Ovary (tissue), 10 donors: ENCODE measurements at regions of chr16 and their contacts with region 1.

Region 1: DNA sequence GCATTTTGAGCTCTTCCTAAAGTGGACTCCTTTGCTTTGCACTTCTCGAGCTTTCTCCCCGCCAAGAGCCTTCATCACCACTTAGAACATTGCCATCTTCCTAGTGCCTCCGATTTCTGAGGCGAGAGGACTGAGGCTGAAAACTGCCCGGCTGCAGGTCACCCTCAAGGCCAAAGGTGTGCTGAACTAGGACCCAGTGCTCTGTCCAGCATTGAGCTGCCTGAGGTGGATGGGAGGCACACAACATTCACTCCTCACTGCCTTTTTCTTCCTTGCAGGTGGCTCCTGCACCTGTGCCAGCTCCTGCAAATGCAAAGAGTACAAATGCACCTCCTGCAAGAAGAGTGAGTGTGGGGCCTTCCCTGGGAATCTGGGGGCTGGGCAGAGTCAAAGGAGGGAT is 5.4 kb downstream of the MT1A start:
- DNase-seq: no peak
- H3K4me3 ChIP-seq: no peak overlapping the region
- H3K27ac ChIP-seq: no peak overlapping the region
- H3K4me1 ChIP-seq: peaks cover 3% of the 10 kb centered on the region
- H3K27me3 ChIP-seq: no peaks in the 10 kb centered on the region
- CTCF ChIP-seq: no peak
- EP300 ChIP-seq: no peak
- POLR2A ChIP-seq: no peak

Region 2: GRCh38 chr16:56419740-56420548 is 223.9 kb before region 1 on chr16:
- intact Hi-C with region 1: no loop called
- DNase-seq: no peak
- H3K4me3 ChIP-seq: no peak overlapping the region
- H3K27ac ChIP-seq: no peak overlapping the region
- H3K4me1 ChIP-seq: peaks cover 13% of the 10 kb centered on the region
- H3K27me3 ChIP-seq: no peaks in the 10 kb centered on the region
- CTCF ChIP-seq: no peak
- EP300 ChIP-seq: no peak
- POLR2A ChIP-seq: no peak

Region 3: GRCh38 chr16:56681939-56682702 is 38.3 kb after region 1 on chr16 and contains the start of gene MT1X:
- intact Hi-C with region 1: loop called in 1 of 4 experiments (anchors 1 kb)
- DNase-seq: peak; percentile 89 to 99 (median 91)
- H3K4me3 ChIP-seq: peak within 1 kb of the TSS; percentile 35
- H3K27ac ChIP-seq: peak within 1 kb of the TSS in 1 of 2 donors; percentile 37
- H3K4me1 ChIP-seq: peaks cover 14% of the 10 kb centered on the region
- H3K27me3 ChIP-seq: no peaks in the 10 kb centered on the region
- CTCF ChIP-seq: no peak
- EP300 ChIP-seq: peak; percentile 97
- POLR2A ChIP-seq: peak; percentile 90
- total RNA-seq, gene MT1X: 30.0 to 1,106 (median 141) TPM